Brain microvascular endothelial cell (primary cell): ENCODE measurements at regions of chr16 and their contacts with region 1.

Region 1: DNA sequence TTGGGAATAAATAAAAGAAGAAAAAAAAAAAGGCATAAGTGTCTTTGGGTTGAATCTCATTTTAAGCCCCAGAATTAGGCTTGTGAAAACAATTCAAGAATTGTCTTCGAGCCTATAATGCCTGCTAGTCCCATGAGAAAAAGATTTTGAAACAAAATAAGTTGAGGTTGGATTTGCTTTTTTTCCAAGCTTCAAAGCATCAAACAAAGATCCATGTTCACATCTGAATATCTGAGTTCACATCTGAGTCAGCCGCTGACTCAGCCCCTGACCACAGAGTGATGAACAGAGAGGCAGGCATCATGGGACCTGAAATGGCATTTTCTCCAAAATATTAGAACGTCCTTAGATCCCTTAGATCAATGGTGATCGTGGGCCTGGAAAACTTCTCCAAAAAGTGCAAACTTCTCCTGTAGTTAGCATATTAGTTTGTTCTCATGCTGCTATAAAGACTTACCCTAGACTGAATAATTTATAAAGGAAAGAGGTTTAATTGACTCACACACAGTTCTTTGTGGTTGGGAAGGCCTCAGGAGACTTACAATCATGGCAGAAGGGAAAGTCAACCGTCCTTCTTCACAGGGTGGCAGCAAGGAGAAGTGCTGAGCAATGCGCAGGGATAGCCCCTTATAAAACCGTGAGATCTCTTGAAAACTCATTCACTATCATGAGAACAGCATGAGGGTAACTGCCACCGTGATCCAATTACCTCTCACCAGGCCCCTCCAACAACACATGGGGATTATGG is 294.6 kb upstream of the HSBP1 start:
- DNase-seq: peak; percentile 93
- H3K4me3 ChIP-seq: no peak overlapping the region
- H3K27ac ChIP-seq: peak overlapping the region; percentile 71
- H3K27me3 ChIP-seq: no peaks in the 10 kb centered on the region
- CTCF ChIP-seq: no peak

Region 2: GRCh38 chr16:83689385-83689831 is 176.2 kb after region 1 on chr16:
- in situ Hi-C with region 1: loop called (anchors 25 kb)
- DNase-seq: peak; percentile 85
- H3K4me3 ChIP-seq: no peak overlapping the region
- H3K27ac ChIP-seq: no peak overlapping the region
- H3K27me3 ChIP-seq: no peaks in the 10 kb centered on the region
- CTCF ChIP-seq: no peak